A673 (cell line): ENCODE measurements at regions of chr14 and their contacts with region 1.

Region 1: DNA sequence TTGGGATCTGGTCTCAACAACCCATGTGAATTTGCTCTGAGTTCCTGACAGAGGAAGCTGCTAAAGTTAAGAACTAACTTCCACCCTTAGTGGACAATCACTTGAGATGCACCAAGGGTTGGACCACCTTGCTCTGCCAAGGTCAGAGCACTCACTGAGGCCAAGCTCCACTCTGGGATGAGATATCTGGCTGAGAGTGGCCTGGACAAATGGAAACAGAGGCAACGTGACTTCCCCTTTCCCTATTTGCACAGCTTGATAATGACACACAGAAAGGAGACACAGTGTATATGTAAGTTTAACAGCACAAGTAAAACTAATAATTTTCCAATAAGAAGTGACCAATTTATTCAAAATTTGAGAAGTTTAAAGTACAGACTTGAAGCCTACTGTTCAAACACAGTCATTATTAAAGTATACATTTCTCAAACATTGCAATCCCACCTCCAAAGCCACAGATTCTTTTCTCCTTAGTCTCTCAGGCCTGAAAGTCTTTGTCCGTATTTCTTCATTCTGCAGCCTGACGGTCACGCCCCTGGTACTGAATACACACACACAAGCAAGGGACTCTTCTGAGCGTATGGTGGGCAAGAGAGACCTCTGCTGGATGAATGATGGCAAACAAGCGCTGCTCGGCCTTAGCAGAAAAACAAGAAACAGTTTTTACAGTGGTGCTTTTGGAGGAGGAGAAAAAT is 28.6 kb downstream of the TMEM30B start:
- DNase-seq: peak; percentile 93
- H3K4me3 ChIP-seq: no peak overlapping the region
- H3K27ac ChIP-seq: peak overlapping the region; percentile 26
- H3K4me1 ChIP-seq: peaks cover 14% of the 10 kb centered on the region
- H3K27me3 ChIP-seq: no peaks in the 10 kb centered on the region
- CTCF ChIP-seq: peak; percentile 95

Region 2: GRCh38 chr14:60622917-60623257 is 629.6 kb before region 1 on chr14:
- CTCF ChIA-PET with region 1: interaction called, 12 read pairs
- POLR2A ChIA-PET with region 1: no interaction called
- intact Hi-C with region 1: loop called (anchors 1 kb)
- DNase-seq: no peak
- H3K4me3 ChIP-seq: no peak overlapping the region
- H3K27ac ChIP-seq: no peak overlapping the region
- H3K4me1 ChIP-seq: peaks cover 3% of the 10 kb centered on the region
- H3K27me3 ChIP-seq: no peaks in the 10 kb centered on the region
- CTCF ChIP-seq: no peak

Region 3: DNA sequence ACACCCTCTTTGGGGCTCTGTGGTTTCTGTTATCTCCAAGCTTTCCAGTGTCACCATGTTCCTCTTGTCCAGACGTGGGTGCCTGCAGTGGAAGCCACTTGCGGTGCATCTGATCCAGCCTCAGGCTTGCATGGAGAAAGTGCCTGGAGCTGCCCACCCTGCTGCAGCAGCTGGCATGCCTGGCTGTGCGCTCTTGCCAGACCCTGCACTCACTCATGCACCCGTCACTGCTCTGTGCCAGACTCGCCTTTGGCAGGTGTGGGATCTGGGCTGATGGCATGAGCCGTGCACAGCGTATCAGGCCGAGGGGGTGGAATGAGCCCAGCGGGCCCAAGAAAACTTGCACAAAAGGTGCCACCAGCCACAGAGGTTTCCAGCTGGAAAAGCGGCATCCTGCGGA is 412.9 kb before region 1 on chr14:
- CTCF ChIA-PET with region 1: no interaction called
- POLR2A ChIA-PET with region 1: no interaction called
- intact Hi-C with region 1: loop called (anchors 5 kb)
- DNase-seq: no peak
- H3K4me3 ChIP-seq: no peak overlapping the region
- H3K27ac ChIP-seq: no peak overlapping the region
- H3K4me1 ChIP-seq: peaks cover 9% of the 10 kb centered on the region
- H3K27me3 ChIP-seq: no peaks in the 10 kb centered on the region
- CTCF ChIP-seq: no peak

Region 4: DNA sequence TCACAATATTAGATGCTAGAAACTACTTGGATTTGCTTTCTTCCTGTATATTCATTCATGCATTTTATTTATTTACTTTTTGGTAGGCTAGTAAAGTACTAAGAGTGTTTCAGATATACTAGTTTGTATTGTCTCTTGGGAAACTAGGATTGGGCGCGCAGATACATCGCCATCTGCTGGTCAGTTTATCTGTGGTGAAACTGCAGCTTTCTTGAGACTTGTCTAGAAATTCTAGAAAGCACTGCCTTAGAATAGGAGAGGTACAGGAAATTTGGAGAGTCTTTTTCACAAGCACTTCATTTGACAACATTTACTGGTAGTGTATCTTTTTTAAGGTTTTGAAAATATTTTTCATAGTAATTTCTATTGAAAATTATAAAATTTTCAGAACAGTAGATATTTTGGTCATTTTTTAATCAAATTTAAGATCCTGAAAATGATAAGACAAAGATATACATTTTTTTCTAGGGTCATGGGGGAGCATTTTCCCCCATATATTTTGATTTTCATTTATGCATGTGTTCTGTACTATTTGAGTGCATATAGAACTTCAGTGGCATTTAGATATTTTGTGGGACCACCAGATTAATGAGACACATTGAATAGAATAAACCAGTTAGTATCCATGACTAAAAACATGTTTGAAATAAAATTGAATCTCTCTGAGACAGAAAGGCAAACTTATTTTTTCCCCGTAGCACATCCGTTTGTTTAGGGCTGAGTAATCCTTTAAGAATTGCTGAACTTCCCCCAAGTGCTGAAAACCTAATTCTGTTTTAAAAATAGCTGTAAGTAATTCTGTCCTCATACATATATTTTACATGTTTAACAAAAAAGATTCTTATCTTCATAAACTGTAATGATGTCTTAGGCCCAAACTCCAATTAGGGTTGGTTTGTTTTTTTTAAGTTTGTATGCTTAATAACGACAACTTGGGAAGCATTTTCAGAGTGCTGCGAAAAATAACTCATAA is 227.0 kb before region 1 on chr14:
- CTCF ChIA-PET with region 1: no interaction called
- POLR2A ChIA-PET with region 1: no interaction called
- intact Hi-C with region 1: loop called (anchors 5 kb)
- DNase-seq: peak; percentile 88
- H3K4me3 ChIP-seq: no peak overlapping the region
- H3K27ac ChIP-seq: peak overlapping the region; percentile 69
- H3K4me1 ChIP-seq: peaks cover 46% of the 10 kb centered on the region
- H3K27me3 ChIP-seq: no peaks in the 10 kb centered on the region
- CTCF ChIP-seq: peak; percentile 95

Region 5: DNA sequence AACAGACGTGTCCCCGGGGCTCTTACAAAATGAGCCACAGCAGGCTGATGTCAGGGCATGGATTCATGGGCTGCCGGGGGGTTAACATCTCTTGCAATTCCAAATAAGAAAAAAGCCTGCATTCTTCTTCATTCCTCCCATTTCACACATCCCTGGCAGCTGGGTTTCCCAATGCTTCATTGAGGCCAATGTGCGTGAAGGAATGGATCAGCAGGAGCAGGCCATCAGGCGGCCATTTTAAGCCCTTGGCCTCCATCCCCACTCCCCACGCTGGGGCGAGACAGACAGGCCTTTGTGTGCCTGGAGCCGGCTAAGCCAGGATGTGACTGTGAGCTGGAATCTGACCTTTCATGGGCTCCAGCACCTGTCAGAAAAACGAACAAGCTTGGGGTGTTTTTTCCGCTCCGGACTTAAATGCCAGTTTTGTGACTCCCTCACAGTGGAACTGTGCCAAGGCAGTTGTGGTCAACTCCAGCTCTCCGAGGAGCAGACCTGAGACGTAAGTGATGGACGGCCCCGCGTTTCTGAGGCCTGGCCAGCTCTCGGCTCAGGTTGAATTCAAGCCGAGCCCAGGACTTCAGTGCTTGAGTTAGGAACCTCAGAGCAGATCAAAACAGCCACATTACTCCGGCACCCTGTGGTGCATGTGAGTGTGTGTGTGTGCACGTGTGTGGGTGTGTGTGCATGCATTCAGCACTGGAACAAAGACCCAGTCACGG is 104.5 kb before region 1 on chr14:
- CTCF ChIA-PET with region 1: no interaction called
- POLR2A ChIA-PET with region 1: interaction called, 5 read pairs
- intact Hi-C with region 1: loop called (anchors 10 kb)
- DNase-seq: no peak
- H3K4me3 ChIP-seq: no peak overlapping the region
- H3K27ac ChIP-seq: no peak overlapping the region
- H3K4me1 ChIP-seq: peaks cover 44% of the 10 kb centered on the region
- H3K27me3 ChIP-seq: no peaks in the 10 kb centered on the region
- CTCF ChIP-seq: no peak

Region 6: DNA sequence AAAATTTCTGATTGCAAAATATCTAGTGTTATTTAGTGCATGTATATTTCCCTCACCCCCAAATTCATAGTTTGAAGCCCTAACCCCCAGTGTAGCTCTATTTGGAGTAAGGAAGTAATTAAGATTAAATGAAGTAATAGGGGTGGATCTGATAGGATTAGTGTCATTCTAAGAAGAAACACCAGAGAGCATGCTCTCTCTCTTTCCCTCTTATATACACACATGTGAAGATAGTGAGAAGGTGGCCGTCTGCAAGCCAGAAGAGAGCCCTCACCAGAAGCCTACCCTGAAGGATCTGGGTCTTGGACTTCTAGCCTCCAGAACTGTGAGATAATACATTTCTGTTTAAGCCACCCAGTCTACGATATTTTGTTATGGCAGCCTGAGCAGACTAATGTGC is 91.7 kb before region 1 on chr14:
- CTCF ChIA-PET with region 1: no interaction called
- POLR2A ChIA-PET with region 1: no interaction called
- intact Hi-C with region 1: no loop called
- DNase-seq: peak; percentile 36
- H3K4me3 ChIP-seq: no peak overlapping the region
- H3K27ac ChIP-seq: no peak overlapping the region
- H3K4me1 ChIP-seq: peaks cover 4% of the 10 kb centered on the region
- H3K27me3 ChIP-seq: no peaks in the 10 kb centered on the region
- CTCF ChIP-seq: no peak